BJ (cell line): ENCODE measurements at regions of chr1 and their contacts with region 1.

Region 1: GRCh38 chr1:242011894-242012660 is 13.2 kb upstream of the MAP1LC3C start:
- DNase-seq: no peak
- H3K4me3 ChIP-seq: no peak overlapping the region
- H3K27me3 ChIP-seq: no peaks in the 10 kb centered on the region
- CTCF ChIP-seq: no peak

Region 2: DNA sequence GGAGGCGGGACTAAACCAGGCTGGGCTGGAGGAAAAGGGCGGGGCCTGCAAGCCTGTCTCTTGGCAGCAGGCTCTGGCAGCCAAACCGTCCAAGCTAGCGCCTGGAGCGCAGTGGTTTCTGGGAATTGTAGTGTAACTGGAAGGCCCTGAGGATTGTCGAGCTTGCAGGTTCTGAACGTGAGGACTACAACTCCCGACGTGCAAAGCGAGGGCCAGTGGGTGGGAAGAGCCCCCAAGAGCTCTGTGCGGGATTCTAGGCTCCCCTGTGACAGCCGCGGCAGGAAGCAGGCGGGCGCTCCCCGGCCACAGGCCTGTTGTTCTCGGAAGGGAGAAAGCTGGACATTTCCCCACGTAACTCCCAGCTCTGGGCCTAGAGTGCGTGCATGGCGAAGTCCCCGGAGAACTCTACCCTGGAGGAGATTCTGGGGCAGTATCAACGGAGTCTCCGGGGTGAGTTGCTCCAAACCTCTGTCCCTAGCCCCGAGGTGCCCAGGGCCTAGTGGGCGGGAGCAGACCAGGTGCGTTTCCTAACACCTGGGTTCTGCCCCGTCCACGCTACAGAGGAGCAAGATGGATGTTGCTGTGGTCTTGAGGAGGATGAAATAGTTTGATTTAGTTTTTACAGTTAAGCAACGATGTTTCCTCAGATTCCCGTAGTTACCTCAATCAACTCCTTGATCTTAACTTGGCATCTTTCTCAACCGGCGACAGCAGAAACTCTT is 1243.9 kb after region 1 on chr1 and contains the start of gene SDCCAG8:
- CTCF ChIA-PET with region 1: no interaction called
- POLR2A ChIA-PET with region 1: interaction called, 10 read pairs
- DNase-seq: peak; percentile 99
- H3K4me3 ChIP-seq: peak within 1 kb of the TSS; percentile 83
- H3K27me3 ChIP-seq: no peaks in the 10 kb centered on the region
- CTCF ChIP-seq: no peak
- polyA plus RNA-seq, gene SDCCAG8: 17.0 and 20.5 TPM in 2 replicates